ENCODE measurements at regions of chr2 and their contacts with region 1.

Region 1: GRCh38 chr2:105789745-105790460 is 45.2 kb downstream of the NCK2 start:
- ATAC-seq: peak in 4 of 8 experiments; percentile 30 to 95 (median 58)
- H3K4me3 ChIP-seq: no peak overlapping the region
- H3K27ac ChIP-seq: no peak overlapping the region
- H3K4me1 ChIP-seq: peaks cover 10 to 15% of the 10 kb centered on the region in 2 donors

Region 2: DNA sequence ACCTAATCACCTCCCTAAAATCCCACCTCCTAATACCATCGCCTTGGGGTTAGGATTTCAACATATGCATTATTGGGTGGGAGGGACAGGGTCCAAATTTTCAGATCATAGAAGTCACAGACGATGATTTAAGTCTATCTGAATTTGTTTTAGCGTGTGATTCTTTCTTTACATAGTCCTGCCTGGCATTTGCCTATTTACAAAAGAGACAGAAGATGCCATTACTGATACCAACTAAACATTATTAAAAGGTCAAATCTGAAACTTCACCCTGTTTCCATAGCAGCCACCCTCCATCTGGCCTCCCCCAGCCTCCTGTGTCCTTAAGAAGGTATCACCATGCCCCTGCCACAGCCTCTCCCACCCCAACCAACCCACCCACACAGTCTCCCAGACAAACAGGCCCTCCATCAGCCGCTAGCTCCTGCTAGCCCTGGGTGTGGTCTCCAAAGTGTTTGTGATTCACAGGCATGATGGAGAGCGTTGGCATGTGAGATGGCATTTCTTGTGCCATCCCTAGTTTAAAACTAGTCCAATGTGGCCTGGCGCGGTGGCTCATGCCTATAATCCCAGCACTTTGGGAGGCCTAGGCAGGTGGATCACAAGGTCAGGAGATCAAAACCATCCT is 593.4 kb before region 1 on chr2:
- in situ Hi-C with region 1: no loop called
- ATAC-seq: no peak
- H3K4me3 ChIP-seq: no peak overlapping the region
- H3K27ac ChIP-seq: no peak overlapping the region
- H3K4me1 ChIP-seq: peaks cover 9 to 12% of the 10 kb centered on the region in 2 donors

Region 3: DNA sequence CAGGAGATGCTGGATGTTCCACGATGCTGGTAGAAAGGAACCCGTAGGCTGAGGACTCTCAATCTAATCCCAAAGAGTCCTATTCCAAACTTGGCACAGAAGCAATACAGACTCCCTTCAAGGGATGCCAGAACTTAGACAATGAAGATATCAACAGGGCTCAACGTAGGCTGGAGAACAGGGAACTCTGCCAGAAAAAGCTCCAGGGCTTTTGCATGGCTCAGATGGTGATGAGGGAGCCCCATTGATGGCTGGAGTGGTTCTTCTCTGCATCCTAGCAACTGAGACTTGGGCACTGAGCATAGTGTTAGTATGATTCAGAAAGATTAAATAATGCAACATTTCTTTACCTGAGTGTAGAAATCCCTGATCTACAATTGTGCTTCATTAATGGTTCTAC is 162.4 kb before region 1 on chr2:
- in situ Hi-C with region 1: no loop called
- ATAC-seq: peak in 3 of 8 experiments; percentile 25 to 89 (median 28)
- H3K4me3 ChIP-seq: no peak overlapping the region
- H3K27ac ChIP-seq: no peak overlapping the region
- H3K4me1 ChIP-seq: peaks cover 2 to 16% of the 10 kb centered on the region in 2 donors

Region 4: DNA sequence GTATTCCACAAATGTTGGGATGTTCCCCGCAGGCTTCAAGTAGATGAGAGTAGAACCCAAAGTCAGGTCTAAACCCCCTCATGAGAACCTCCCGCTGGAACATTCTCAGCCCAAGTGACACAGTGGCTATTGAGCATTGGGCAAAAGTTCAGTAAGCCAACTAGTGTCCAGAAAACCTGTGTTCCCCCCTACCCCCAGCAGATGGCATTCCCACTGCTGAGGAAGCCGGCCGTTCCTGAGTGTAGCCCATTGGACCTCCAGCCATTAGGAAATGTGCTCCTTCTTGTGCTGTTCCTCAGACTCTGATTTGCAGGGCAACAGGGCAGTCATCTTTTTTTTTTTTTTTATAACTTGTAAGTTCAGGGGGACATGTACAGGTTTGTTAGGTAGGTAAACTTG is 106.9 kb after region 1 on chr2:
- in situ Hi-C with region 1: loop called in 1 of 9 experiments (anchors 10 kb)
- ATAC-seq: no peak
- H3K4me3 ChIP-seq: no peak overlapping the region
- H3K27ac ChIP-seq: no peak overlapping the region
- H3K4me1 ChIP-seq: no peaks in the 10 kb centered on the region